ENCODE measurements at regions of chr1 and their contacts with region 1.

Region 1: GRCh38 chr1:204278254-204278653 is 64.5 kb upstream of the GOLT1A start:
- DNase-seq: no peak
- H3K4me3 ChIP-seq: no peak overlapping the region
- CTCF ChIP-seq: no peak

Region 2: GRCh38 chr1:204041232-204041767 is 237.0 kb before region 1 on chr1:
- CTCF ChIA-PET with region 1: no interaction called
- POLR2A ChIA-PET with region 1: no interaction called
- DNase-seq: no peak
- H3K4me3 ChIP-seq: no peak overlapping the region
- CTCF ChIP-seq: no peak

Region 3: GRCh38 chr1:204263254-204263910 is 14.9 kb before region 1 on chr1:
- CTCF ChIA-PET with region 1: interaction called, 17 read pairs
- POLR2A ChIA-PET with region 1: no interaction called
- DNase-seq: no peak
- H3K4me3 ChIP-seq: no peak overlapping the region
- CTCF ChIP-seq: no peak

Region 4: GRCh38 chr1:204319491-204319907 is 41.2 kb after region 1 on chr1:
- CTCF ChIA-PET with region 1: no interaction called
- POLR2A ChIA-PET with region 1: no interaction called
- DNase-seq: peak; percentile 76
- H3K4me3 ChIP-seq: no peak overlapping the region
- CTCF ChIP-seq: no peak

Measured in AG04449 (cell line).